PC-9 (cell line): ENCODE measurements at regions of chr2 and their contacts with region 1.

Region 1: GRCh38 chr2:234951664-234952269 is at the start of gene SH3BP4:
- DNase-seq: peak; percentile 54 to 91
- H3K4me3 ChIP-seq: peak within 1 kb of the TSS; percentile 97
- H3K27ac ChIP-seq: peak within 1 kb of the TSS; percentile 53
- H3K4me1 ChIP-seq: peaks cover 38% of the 10 kb centered on the region
- H3K27me3 ChIP-seq: no peaks in the 10 kb centered on the region
- CTCF ChIP-seq: no peak
- total RNA-seq, gene SH3BP4: 131 and 135 TPM in 2 replicates

Region 2: GRCh38 chr2:234679741-234680687 is 271.8 kb before region 1 on chr2:
- CTCF ChIA-PET with region 1: no interaction called
- POLR2A ChIA-PET with region 1: interaction called, 4 read pairs
- intact Hi-C with region 1: loop called (anchors 5 kb)
- DNase-seq: peak; percentile 86 to 96
- H3K4me3 ChIP-seq: no peak overlapping the region
- H3K27ac ChIP-seq: peak overlapping the region; percentile 90
- H3K4me1 ChIP-seq: peaks cover 75% of the 10 kb centered on the region
- H3K27me3 ChIP-seq: no peaks in the 10 kb centered on the region
- CTCF ChIP-seq: no peak

Region 3: DNA sequence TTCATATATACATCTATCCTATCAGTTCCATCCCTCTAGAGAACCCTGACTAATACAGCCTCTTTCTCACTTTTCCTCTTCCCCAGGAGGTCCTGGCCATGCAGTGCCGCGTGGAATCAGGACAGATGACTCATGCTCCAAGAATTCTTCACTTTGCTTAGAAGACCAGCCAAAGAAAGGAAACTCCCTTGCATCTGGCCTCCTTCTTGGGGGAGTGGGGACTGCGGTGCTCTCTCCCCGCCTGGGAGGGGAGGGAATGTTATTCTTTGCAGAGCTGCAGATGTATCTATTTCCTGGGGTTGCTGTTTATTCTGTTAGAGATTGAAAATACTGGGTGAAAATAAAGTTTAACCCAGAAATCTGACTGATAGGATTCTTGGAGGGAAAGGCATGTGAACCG is 111.4 kb before region 1 on chr2:
- CTCF ChIA-PET with region 1: no interaction called
- POLR2A ChIA-PET with region 1: interaction called, 6 read pairs
- intact Hi-C with region 1: loop called (anchors 2 kb)
- DNase-seq: peak; percentile 86 to 92
- H3K4me3 ChIP-seq: no peak overlapping the region
- H3K27ac ChIP-seq: peak overlapping the region; percentile 63
- H3K4me1 ChIP-seq: peaks cover 38% of the 10 kb centered on the region
- H3K27me3 ChIP-seq: no peaks in the 10 kb centered on the region
- CTCF ChIP-seq: no peak

Region 4: GRCh38 chr2:235026649-235027557 is 75.1 kb after region 1 on chr2:
- CTCF ChIA-PET with region 1: no interaction called
- POLR2A ChIA-PET with region 1: interaction called, 9 read pairs
- intact Hi-C with region 1: loop called (anchors 2 kb)
- DNase-seq: peak; percentile 98 to 99
- H3K4me3 ChIP-seq: peak overlapping the region; percentile 61
- H3K27ac ChIP-seq: peak overlapping the region; percentile 98
- H3K4me1 ChIP-seq: peaks cover 79% of the 10 kb centered on the region
- H3K27me3 ChIP-seq: no peaks in the 10 kb centered on the region
- CTCF ChIP-seq: no peak

Region 5: GRCh38 chr2:235098736-235099494 is 147.1 kb after region 1 on chr2:
- CTCF ChIA-PET with region 1: no interaction called
- POLR2A ChIA-PET with region 1: no interaction called
- intact Hi-C with region 1: loop called (anchors 2 kb)
- DNase-seq: peak in 1 of 2 experiments; percentile 90
- H3K4me3 ChIP-seq: no peak overlapping the region
- H3K27ac ChIP-seq: peak overlapping the region; percentile 23
- H3K4me1 ChIP-seq: peaks cover 24% of the 10 kb centered on the region
- H3K27me3 ChIP-seq: no peaks in the 10 kb centered on the region
- CTCF ChIP-seq: no peak

Region 6: GRCh38 chr2:235577404-235578330 is 625.9 kb after region 1 on chr2:
- CTCF ChIA-PET with region 1: no interaction called
- POLR2A ChIA-PET with region 1: no interaction called
- intact Hi-C with region 1: loop called (anchors 5 kb)
- DNase-seq: no peak
- H3K4me3 ChIP-seq: no peak overlapping the region
- H3K27ac ChIP-seq: no peak overlapping the region
- H3K4me1 ChIP-seq: peaks cover 26% of the 10 kb centered on the region
- H3K27me3 ChIP-seq: no peaks in the 10 kb centered on the region
- CTCF ChIP-seq: no peak